ENCODE measurements at regions of chr18 and their contacts with region 1.

Region 1: DNA sequence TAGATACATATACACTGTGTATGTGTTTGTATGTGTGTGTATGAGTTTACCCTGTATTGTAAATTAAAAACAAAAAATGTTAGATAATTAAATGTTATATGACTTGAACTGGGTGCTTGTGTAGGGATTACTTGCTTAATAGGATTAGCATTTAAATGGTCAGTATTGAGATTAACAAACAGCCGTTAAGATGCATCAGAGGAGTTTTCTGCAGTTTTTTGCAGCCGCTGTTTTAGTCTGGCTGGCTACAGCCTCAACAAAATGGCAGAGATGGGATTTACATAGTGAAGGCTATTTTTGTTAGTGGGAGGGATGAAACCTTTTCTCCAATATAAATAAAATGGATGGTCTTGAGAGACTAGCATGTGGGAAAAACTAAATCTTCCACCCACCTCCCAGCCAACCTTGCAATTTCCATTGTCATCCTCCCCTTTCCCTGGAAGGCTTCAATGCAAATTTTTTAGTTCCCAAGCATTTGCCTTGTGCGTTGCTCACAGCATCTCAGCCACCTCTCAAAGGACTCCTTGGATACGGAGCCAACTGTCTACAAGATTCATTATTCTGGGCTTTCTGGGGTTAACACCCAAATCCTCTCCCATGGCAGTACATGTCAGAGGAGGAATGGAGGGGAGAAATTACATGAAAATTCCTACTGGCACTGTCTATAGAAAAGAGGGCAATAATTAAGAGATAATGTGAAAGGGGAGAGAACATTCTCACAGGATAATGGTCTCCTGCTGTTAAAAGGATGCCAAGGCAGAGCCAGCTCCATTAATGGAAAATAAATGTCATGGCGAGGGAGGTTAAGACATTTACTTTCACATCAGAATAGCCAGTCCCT is 351.9 kb downstream of the CDH2 start:
- DNase-seq: no peak
- ATAC-seq: no peak
- H3K4me3 Mint-ChIP-seq: no peak overlapping the region
- H3K27ac Mint-ChIP-seq: no peak overlapping the region
- H3K4me1 Mint-ChIP-seq: no peaks in the 10 kb centered on the region
- H3K27me3 Mint-ChIP-seq: no peaks in the 10 kb centered on the region

Region 2: GRCh38 chr18:27771571-27771970 is 53.5 kb before region 1 on chr18:
- CTCF ChIA-PET with region 1: no interaction called
- POLR2A ChIA-PET with region 1: no interaction called
- intact Hi-C with region 1: loop called in 1 of 2 experiments (anchors 5 kb)
- DNase-seq: no peak
- ATAC-seq: no peak
- H3K4me3 Mint-ChIP-seq: no peak overlapping the region
- H3K27ac Mint-ChIP-seq: no peak overlapping the region
- H3K4me1 Mint-ChIP-seq: no peaks in the 10 kb centered on the region
- H3K27me3 Mint-ChIP-seq: no peaks in the 10 kb centered on the region

Region 3: GRCh38 chr18:28334516-28334915 is 509.5 kb after region 1 on chr18:
- CTCF ChIA-PET with region 1: no interaction called
- POLR2A ChIA-PET with region 1: no interaction called
- intact Hi-C with region 1: no loop called
- DNase-seq: no peak
- ATAC-seq: no peak
- H3K4me3 Mint-ChIP-seq: no peak overlapping the region
- H3K27ac Mint-ChIP-seq: no peak overlapping the region
- H3K4me1 Mint-ChIP-seq: no peaks in the 10 kb centered on the region
- H3K27me3 Mint-ChIP-seq: no peaks in the 10 kb centered on the region

Measured in activated CD4-positive, alpha-beta T cell treated with anti-CD3 and anti-CD28 coated beads for 36 hours (primary cell).